ENCODE measurements at regions of chr1 and their contacts with region 1.

Region 1: DNA sequence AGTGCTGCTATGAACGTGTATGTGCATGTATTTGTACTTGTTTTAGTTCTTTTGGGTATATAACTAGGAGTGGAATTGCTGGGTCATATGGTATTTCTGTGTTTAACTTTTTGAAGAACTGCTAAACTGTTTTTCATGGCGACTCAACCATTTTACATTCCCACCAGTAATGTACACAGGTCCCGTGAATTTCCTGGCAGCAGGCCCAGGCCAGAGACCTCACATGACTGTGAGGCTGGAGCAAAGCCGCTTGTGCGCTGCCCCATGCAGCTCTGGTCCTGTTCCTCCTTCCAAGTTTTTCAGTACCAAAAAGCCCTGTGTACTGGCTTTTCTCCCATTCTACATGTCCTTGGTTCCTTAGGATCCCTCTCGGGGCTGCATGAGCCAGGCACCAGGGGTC is 29.6 kb downstream of the ACOT11 start:
- DNase-seq: peak; percentile 87 to 94
- H3K4me3 ChIP-seq: no peak overlapping the region
- H3K27ac ChIP-seq: peak overlapping the region; percentile 87 to 98
- H3K4me1 ChIP-seq: peaks cover 0 to 59% (median 38%) of the 10 kb centered on the region in 4 donors
- H3K27me3 ChIP-seq: no peaks in the 10 kb centered on the region
- CTCF ChIP-seq: no peak

Region 2: DNA sequence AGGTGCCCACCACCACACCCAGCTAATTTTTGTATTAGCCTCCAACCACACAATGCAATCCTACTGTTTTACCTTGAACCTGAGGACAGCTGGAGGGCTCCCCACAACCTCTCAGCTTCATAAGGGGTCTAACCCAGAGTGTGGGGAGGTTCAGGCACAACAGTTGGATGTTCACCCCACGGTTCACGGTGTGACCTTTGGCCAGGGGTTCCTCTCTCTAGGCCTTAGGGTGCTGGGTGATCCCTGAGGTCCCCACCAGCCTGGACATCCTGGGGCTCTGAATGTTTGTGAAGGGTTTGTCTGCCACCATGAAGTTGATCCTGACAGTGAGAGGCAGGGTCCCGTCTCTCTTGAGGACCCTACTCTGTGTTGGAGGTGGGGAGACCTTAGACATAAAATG is 25.7 kb before region 1 on chr1:
- intact Hi-C with region 1: loop called (anchors 2 kb)
- DNase-seq: no peak
- H3K4me3 ChIP-seq: no peak overlapping the region
- H3K27ac ChIP-seq: no peak overlapping the region
- H3K4me1 ChIP-seq: peaks cover 0 to 31% (median 24%) of the 10 kb centered on the region in 4 donors
- H3K27me3 ChIP-seq: no peaks in the 10 kb centered on the region
- CTCF ChIP-seq: no peak

Measured in tibial artery (tissue), 4 donors.